ENCODE measurements at regions of chr3 and their contacts with region 1.

Region 1: DNA sequence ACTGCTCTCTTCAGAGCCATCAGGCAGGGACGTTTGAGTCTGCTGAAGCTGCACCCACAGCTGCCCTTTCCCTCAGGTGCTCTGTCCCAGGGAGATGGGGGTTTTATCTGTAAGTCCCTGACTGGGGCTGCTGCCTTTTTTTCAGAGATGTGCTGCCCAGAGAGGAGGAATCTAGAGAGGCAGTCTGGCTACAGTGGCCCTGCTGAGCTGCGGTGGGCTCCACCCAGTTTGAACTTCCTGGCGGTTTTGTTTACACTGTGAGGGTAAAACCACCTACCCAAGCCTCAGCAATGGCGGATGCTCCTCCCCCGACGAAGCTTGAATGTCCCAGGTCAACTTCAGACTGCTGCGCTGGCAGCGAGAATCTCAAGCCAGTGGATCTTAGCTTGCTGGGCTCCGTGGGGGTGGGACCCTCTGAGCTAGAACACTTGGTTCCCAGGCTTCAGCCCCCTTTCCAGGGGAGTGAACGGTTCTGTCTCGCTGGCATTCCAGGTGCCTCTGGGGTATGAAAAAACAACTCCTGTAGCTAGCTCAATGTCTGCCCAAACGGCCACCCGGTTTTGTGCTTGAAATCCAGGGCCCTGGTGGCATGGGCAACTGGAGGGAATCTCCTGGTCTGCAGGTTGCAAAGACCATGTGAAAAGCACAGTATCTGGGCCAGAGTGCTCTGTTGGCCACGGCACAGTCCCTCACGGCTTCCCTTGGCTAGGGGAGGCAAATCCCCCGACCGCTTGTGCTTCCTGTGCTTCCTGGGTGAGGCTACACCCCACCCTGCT is 21.1 kb upstream of the ST6GAL1 start:
- DNase-seq: peak; percentile 58 to 89 (median 82)
- H3K4me3 ChIP-seq: peak overlapping the region; percentile 40
- H3K4me3 Mint-ChIP-seq: peak overlapping the region; percentile 78 to 86 (median 80)
- H3K27ac ChIP-seq: peak overlapping the region; percentile 73
- H3K27ac Mint-ChIP-seq: peak overlapping the region; percentile 88 to 98 (median 92)
- H3K4me1 ChIP-seq: peaks cover 22% of the 10 kb centered on the region
- H3K4me1 Mint-ChIP-seq: peaks cover 41 to 56% (median 51%) of the 10 kb centered on the region in 3 donors
- H3K27me3 ChIP-seq: no peaks in the 10 kb centered on the region
- H3K27me3 Mint-ChIP-seq: no peaks in the 10 kb centered on the region

Region 2: DNA sequence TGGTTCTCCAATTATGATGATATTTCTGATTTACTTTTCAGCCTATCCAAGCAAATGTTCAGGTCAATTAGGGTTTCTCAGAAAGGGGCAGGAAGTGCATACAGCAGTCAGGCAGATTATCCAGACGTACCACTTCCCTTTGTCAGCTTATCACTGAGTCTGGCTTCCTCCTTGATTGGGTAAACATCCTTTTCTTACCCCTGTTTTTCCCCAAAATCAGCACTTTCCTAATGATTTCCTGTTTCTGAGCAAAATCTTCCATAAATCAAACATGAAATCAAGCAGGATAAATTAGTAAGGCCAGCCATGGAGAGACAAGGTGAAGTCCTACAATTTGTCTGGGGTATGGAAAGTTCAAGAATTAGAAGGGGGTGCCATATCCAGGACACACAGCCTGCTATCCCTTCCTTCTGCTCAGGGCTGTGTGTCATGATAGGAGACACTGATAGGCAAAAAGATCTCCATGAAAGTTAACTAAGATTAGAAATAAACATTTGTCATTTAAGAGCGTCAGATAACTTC is 37.8 kb before region 1 on chr3:
- CTCF ChIA-PET with region 1: no interaction called
- POLR2A ChIA-PET with region 1: interaction called, 11 read pairs
- DNase-seq: peak in 1 of 5 donors; percentile 3
- H3K4me3 ChIP-seq: no peak overlapping the region
- H3K4me3 Mint-ChIP-seq: peak overlapping the region in 2 of 7 donors; percentile 0 to 37
- H3K27ac ChIP-seq: peak overlapping the region; percentile 8
- H3K27ac Mint-ChIP-seq: peak overlapping the region in 4 of 8 donors; percentile 19 to 86 (median 65)
- H3K4me1 ChIP-seq: peaks cover 16% of the 10 kb centered on the region
- H3K4me1 Mint-ChIP-seq: peaks cover 19 to 31% (median 25%) of the 10 kb centered on the region in 3 donors
- H3K27me3 ChIP-seq: no peaks in the 10 kb centered on the region
- H3K27me3 Mint-ChIP-seq: no peaks in the 10 kb centered on the region

Region 3: DNA sequence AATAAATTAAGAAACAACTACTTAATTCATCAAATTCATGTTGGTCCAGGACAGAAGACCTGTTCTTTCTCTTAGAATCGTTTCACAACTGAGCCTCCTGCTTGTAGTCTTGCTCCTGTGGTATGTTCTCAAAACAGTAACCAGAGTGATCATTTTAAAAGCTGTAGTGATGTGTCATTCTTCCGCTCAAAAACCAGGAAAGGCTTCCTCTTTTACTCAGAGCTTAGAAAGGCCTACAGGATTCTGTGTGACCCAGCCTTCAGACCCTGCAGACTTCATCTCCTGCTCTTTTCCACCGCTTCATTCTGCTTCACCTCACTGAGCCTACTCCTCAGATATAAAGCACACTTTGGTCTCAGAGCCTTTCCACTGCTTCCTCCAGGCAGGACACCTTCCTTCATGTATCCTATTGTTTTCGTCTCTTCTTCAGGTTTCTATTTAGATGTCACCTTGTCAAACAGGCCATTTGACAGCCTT is 43.8 kb after region 1 on chr3:
- CTCF ChIA-PET with region 1: no interaction called
- POLR2A ChIA-PET with region 1: no interaction called
- DNase-seq: no peak
- H3K4me3 ChIP-seq: no peak overlapping the region
- H3K4me3 Mint-ChIP-seq: peak overlapping the region in 6 of 7 donors; percentile 20 to 64 (median 44)
- H3K27ac ChIP-seq: peak overlapping the region; percentile 53
- H3K27ac Mint-ChIP-seq: peak overlapping the region; percentile 48 to 92 (median 77)
- H3K4me1 ChIP-seq: peaks cover 69% of the 10 kb centered on the region
- H3K4me1 Mint-ChIP-seq: peaks cover 91 to 99% (median 98%) of the 10 kb centered on the region in 3 donors
- H3K27me3 ChIP-seq: no peaks in the 10 kb centered on the region
- H3K27me3 Mint-ChIP-seq: no peaks in the 10 kb centered on the region

Measured in CD8-positive, alpha-beta memory T cell (primary cell).